GM12878 (cell line): ENCODE measurements at regions of chr10 and their contacts with region 1.

Region 1: DNA sequence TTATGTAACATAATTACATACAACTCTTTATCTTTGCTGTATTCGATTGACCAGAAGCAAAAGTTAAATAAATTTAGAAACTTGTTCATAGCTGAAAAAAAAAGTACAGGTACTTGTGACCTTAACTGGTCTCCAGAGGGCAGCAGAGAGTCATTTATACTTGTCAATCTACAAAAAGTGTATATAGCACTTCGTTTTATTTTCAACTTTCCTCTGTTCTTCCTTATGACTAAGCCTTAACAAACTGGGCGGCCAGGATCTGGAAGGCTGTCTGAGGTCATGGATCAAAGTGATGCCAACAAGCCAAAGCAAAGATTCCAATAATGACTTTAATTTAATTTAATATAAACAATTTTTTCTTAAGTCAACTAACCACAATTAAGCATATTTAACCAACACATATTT is 29.8 kb downstream of the C10orf67 start:
- DNase-seq: peak; percentile 28
- ATAC-seq: peak; percentile 61
- H3K4me3 ChIP-seq: no peak overlapping the region
- H3K27ac ChIP-seq: no peak overlapping the region
- H3K4me1 ChIP-seq: no peaks in the 10 kb centered on the region
- H3K27me3 ChIP-seq: no peaks in the 10 kb centered on the region
- CTCF ChIP-seq: peak; percentile 55 to 70 (median 62)
- EP300 ChIP-seq: no peak
- POLR2A ChIP-seq: no peak
- RAD21 ChIP-seq: peak; percentile 80

Region 2: DNA sequence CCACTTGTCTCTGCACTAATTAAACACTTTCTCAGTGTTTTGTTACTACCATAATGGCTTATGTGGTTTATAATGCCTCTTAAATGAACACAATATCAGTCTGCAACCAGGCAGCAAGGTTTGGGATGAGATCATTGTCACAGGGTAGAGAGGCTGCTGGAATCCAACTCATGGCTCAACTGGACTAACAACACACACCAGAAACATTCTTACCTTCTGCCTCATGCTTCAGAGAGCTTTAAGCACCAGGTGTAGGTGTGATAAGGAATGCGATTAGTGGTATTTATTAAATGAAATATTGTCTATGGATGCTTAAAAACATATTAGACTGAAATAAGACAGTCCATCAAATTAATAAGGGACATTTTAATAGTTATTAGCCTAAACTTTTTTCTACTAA is 97.4 kb before region 1 on chr10:
- CTCF ChIA-PET with region 1: no interaction called
- POLR2A ChIA-PET with region 1: no interaction called
- RAD21 ChIA-PET with region 1: no interaction called
- SMC1A ChIA-PET with region 1: no interaction called
- in situ Hi-C with region 1: no loop called
- intact Hi-C with region 1: no loop called
- DNase-seq: no peak
- ATAC-seq: no peak
- H3K4me3 ChIP-seq: no peak overlapping the region
- H3K27ac ChIP-seq: no peak overlapping the region
- H3K4me1 ChIP-seq: no peaks in the 10 kb centered on the region
- H3K27me3 ChIP-seq: no peaks in the 10 kb centered on the region
- CTCF ChIP-seq: no peak
- EP300 ChIP-seq: no peak
- POLR2A ChIP-seq: no peak
- RAD21 ChIP-seq: no peak

Region 3: GRCh38 chr10:23525406-23525805 is 210.6 kb after region 1 on chr10:
- CTCF ChIA-PET with region 1: interaction called, 36 read pairs
- POLR2A ChIA-PET with region 1: no interaction called
- RAD21 ChIA-PET with region 1: interaction called, 4 read pairs
- SMC1A ChIA-PET with region 1: interaction called, 18 read pairs
- in situ Hi-C with region 1: loop called (anchors 5 kb)
- intact Hi-C with region 1: loop called (anchors 1 kb)
- DNase-seq: no peak
- ATAC-seq: peak; percentile 72
- H3K4me3 ChIP-seq: no peak overlapping the region
- H3K27ac ChIP-seq: no peak overlapping the region
- H3K4me1 ChIP-seq: no peaks in the 10 kb centered on the region
- H3K27me3 ChIP-seq: no peaks in the 10 kb centered on the region
- CTCF ChIP-seq: peak; percentile 22 to 52 (median 50); a peak in 5 of 6 replicates
- EP300 ChIP-seq: no peak
- POLR2A ChIP-seq: no peak
- RAD21 ChIP-seq: peak; percentile 68

Region 4: DNA sequence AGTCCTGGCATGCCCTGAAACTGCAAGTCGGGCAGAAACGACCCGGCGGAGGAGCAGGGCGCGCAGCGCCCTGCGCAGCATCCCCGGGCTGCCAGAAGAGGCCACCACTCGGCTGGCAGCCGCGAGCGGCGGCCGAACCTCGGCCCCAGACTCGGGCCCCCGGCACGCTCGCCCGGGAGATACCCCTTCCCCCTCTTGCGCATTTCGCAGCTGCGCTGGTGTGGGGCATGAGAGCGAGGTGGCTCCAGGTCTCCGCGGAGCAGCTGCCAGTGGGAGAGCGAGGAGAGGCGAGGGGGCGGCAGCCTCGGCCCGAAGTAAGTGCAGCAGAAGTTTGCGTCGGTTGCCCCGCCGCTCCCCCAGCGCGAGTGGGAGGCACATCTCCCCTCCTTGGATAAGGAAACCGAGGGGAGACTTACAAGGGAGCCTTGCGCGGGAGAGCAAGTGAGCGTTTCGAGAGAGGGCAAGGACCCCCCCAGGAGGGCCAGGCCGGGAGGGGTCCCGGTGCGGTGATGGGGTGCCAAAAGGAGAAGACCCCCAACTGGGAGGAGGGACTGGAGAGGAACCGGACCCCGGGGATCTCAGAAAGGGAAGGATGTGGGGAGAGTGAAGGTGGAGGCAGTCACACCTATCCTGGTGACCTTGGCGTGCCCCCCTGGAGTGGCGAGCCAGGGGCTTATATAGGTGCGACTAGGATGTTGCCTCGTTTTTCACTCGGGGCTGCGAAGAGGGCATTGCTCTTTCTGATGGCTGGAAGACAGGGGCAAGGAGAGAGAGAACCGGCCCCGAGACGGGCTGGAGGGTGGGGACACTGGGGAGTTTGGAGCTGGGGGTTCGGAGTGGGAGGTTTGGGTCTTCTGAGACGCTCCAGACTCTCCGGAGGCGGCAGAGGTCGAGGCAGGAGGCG is 380.3 kb after region 1 on chr10:
- CTCF ChIA-PET with region 1: no interaction called
- POLR2A ChIA-PET with region 1: no interaction called
- RAD21 ChIA-PET with region 1: interaction called, 5 read pairs
- SMC1A ChIA-PET with region 1: no interaction called
- in situ Hi-C with region 1: loop called (anchors 5 kb)
- intact Hi-C with region 1: no loop called
- DNase-seq: no peak
- ATAC-seq: no peak
- H3K4me3 ChIP-seq: no peak overlapping the region
- H3K27ac ChIP-seq: no peak overlapping the region
- H3K4me1 ChIP-seq: no peaks in the 10 kb centered on the region
- H3K27me3 ChIP-seq: peaks cover 4 to 7% of the 10 kb centered on the region in 2 experiments; a peak in 3 of 4 replicates
- CTCF ChIP-seq: no peak
- EP300 ChIP-seq: no peak
- POLR2A ChIP-seq: no peak
- RAD21 ChIP-seq: no peak

Region 5: GRCh38 chr10:24201503-24202180 is 886.8 kb after region 1 on chr10:
- CTCF ChIA-PET with region 1: no interaction called
- POLR2A ChIA-PET with region 1: no interaction called
- RAD21 ChIA-PET with region 1: interaction called, 3 read pairs
- SMC1A ChIA-PET with region 1: no interaction called
- in situ Hi-C with region 1: no loop called
- intact Hi-C with region 1: loop called (anchors 10 kb)
- DNase-seq: no peak
- ATAC-seq: no peak
- H3K4me3 ChIP-seq: no peak overlapping the region
- H3K27ac ChIP-seq: no peak overlapping the region
- H3K4me1 ChIP-seq: peaks cover 3% of the 10 kb centered on the region
- H3K27me3 ChIP-seq: no peaks in the 10 kb centered on the region
- CTCF ChIP-seq: no peak
- EP300 ChIP-seq: no peak
- POLR2A ChIP-seq: no peak
- RAD21 ChIP-seq: no peak